ENCODE measurements at regions of chr17 and their contacts with region 1.

Region 1: DNA sequence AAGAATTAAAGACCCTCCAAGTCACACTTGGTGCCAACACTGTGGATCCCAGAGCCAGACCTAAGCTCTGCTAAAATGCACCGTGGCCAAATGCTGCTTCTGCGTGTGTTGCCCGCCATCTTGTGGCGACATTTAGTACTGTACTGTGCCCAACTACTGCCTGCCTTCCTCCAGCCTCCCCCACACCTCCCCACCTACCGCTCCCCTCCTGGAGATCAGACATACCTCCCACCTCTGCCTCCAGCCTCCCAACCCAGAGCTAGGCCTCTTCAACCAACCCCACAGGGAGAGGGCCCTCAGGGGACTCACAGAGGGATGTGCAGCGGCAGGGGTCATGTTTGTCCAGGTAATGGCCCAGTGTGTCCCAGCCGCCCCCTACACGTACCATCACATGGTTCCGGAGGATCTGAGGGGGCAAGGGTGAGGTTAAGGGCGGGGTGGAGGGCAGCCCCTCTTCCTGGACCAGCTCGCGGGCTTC is 5.5 kb downstream of the GAS2L2 start:
- DNase-seq: peak; percentile 68
- H3K4me3 ChIP-seq: no peak overlapping the region
- H3K27ac ChIP-seq: no peak overlapping the region
- H3K4me1 ChIP-seq: no peaks in the 10 kb centered on the region
- H3K27me3 ChIP-seq: peaks cover 25% of the 10 kb centered on the region in 2 experiments
- CTCF ChIP-seq: peak; percentile 67 to 83
- POLR2A ChIP-seq: no peak

Region 2: GRCh38 chr17:35170968-35171771 is 576.4 kb before region 1 on chr17:
- CTCF ChIA-PET with region 1: interaction called, 13 read pairs
- POLR2A ChIA-PET with region 1: no interaction called
- dilution Hi-C with region 1: no loop called
- intact Hi-C with region 1: loop called (anchors 1 kb)
- DNase-seq: peak; percentile 53
- H3K4me3 ChIP-seq: no peak overlapping the region
- H3K27ac ChIP-seq: no peak overlapping the region
- H3K4me1 ChIP-seq: no peaks in the 10 kb centered on the region
- H3K27me3 ChIP-seq: peaks cover 0 to 3% of the 10 kb centered on the region in 2 experiments
- CTCF ChIP-seq: no peak
- POLR2A ChIP-seq: no peak

Region 3: GRCh38 chr17:35534576-35535093 is 212.9 kb before region 1 on chr17:
- CTCF ChIA-PET with region 1: interaction called, 16 read pairs
- POLR2A ChIA-PET with region 1: no interaction called
- dilution Hi-C with region 1: no loop called
- intact Hi-C with region 1: loop called (anchors 1 kb)
- DNase-seq: no peak
- H3K4me3 ChIP-seq: no peak overlapping the region
- H3K27ac ChIP-seq: no peak overlapping the region
- H3K4me1 ChIP-seq: peaks cover 9% of the 10 kb centered on the region
- H3K27me3 ChIP-seq: no peaks in the 10 kb centered on the region
- CTCF ChIP-seq: no peak
- POLR2A ChIP-seq: no peak

Region 4: DNA sequence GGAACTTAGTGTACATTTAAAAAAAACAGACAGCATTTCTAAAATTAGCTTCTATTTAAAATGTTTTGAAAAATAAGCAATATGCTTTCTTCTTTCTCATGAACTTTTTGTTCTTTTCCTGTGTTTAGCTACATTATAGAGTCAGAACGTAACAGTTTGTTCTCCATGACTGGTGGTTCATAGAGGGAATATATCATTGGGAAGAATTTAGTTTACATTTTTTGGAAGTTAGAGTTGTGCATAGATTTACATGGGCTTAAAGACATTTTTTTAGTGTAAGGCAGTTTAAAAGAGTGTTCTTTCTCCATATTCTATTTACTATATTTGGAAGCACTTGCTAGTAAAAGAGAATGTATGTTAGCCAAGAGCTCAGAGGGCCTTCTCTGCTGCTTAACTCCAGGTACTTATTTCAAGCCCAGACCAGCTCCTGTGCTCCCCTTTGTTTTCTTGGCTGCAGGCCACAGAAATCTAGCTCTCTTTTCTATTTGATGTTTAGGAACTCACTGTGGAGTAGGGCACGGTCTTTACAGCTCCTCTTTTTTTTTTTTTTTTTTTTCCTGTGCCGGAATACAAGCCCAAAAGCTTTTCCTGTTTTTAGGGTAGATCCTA is 140.2 kb before region 1 on chr17:
- CTCF ChIA-PET with region 1: interaction called, 270 read pairs
- POLR2A ChIA-PET with region 1: no interaction called
- dilution Hi-C with region 1: loop called (anchors 25 kb)
- intact Hi-C with region 1: no loop called
- DNase-seq: no peak
- H3K4me3 ChIP-seq: no peak overlapping the region
- H3K27ac ChIP-seq: no peak overlapping the region
- H3K4me1 ChIP-seq: no peaks in the 10 kb centered on the region
- H3K27me3 ChIP-seq: no peaks in the 10 kb centered on the region
- CTCF ChIP-seq: no peak
- POLR2A ChIP-seq: no peak

Region 5: DNA sequence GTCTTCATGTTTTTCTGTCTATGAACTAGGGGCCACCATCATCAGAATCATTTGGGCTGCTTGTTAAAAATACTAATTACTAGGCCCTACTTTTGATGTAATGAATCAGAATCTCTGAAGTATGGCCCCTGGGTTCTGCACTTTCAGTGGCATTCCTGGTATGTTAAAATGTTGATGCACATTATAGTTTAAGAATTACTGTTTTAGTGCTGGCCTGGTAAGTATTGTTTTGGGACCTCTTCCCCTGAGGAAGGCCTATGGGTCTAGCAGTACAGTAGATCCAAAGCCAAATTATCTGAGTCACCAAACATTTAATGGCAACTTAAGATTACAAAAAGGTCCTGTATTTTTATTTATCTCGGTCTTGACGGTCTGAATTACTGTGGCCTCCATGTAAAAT is 101.7 kb before region 1 on chr17:
- CTCF ChIA-PET with region 1: interaction called, 10 read pairs
- POLR2A ChIA-PET with region 1: no interaction called
- dilution Hi-C with region 1: no loop called
- intact Hi-C with region 1: no loop called
- DNase-seq: no peak
- H3K4me3 ChIP-seq: no peak overlapping the region
- H3K27ac ChIP-seq: no peak overlapping the region
- H3K4me1 ChIP-seq: no peaks in the 10 kb centered on the region
- H3K27me3 ChIP-seq: no peaks in the 10 kb centered on the region
- CTCF ChIP-seq: no peak
- POLR2A ChIP-seq: no peak

Region 6: DNA sequence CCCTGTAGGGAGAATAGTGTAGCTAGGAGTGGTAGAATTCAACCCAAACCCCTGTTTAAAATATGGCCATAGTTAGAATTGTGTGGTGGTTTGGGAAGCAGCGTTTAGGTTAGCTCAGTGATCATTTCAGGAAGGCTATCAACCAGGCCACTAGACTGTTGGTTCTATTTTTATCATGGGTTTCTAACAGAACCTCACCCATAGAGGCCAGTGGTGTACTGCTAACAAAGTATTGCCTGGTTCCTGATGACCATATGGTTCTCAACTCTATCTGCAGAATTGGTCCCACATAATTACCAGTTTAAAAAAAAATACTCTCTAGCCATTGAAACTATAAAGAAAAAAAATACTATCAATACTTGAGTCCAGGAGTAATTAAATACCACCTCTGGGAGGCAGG is 86.7 kb before region 1 on chr17:
- CTCF ChIA-PET with region 1: interaction called, 12 read pairs
- POLR2A ChIA-PET with region 1: no interaction called
- dilution Hi-C with region 1: no loop called
- intact Hi-C with region 1: no loop called
- DNase-seq: no peak
- H3K4me3 ChIP-seq: no peak overlapping the region
- H3K27ac ChIP-seq: no peak overlapping the region
- H3K4me1 ChIP-seq: no peaks in the 10 kb centered on the region
- H3K27me3 ChIP-seq: no peaks in the 10 kb centered on the region
- CTCF ChIP-seq: no peak
- POLR2A ChIP-seq: no peak

Region 7: DNA sequence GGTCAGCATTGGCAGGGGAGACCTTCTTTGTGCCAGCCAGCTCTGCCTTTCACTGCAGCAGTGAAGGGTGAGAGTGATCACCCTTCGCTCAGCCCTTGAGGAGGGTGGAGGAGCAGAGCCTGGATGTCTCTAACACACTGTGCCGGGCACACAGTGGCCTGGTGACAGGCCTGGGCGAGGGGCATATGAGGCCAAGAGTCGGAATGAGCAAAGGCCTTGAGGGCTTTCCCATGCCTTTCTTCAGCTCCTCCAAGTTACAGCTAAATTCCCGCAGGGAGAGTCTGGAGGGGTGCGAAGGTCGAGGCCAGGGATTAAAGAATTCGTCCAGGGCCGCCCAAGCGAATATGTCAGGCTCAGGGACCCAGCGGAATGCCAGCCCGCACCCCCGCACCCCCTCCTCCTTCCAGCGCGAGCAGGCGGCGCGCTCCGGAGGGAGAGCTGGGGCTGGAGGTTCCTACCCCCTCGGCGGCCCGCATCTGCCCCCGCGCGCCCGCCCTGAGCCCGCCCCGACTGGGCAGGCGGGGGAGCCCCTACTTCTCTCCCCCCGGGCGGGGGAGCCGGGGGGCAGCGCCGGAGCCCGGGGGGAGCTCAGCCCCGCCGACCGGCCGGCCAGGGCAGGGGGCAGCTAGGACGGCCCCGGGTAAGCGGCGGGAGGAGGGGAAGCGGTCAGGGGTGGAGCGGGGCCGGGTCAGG is 16.2 kb before region 1 on chr17 and contains the start of gene RASL10B:
- CTCF ChIA-PET with region 1: interaction called, 16 read pairs
- POLR2A ChIA-PET with region 1: no interaction called
- dilution Hi-C with region 1: no loop called
- intact Hi-C with region 1: no loop called
- DNase-seq: peak; percentile 28
- H3K4me3 ChIP-seq: peak within 1 kb of the TSS in 2 of 3 experiments; percentile 6 to 44
- H3K27ac ChIP-seq: no peak within 1 kb of the TSS
- H3K4me1 ChIP-seq: peaks cover 4% of the 10 kb centered on the region
- H3K27me3 ChIP-seq: peaks cover 3 to 11% of the 10 kb centered on the region in 2 experiments
- CTCF ChIP-seq: no peak
- POLR2A ChIP-seq: no peak
- total RNA-seq, gene RASL10B: 0.71 and 0.78 TPM in 2 replicates

Region 8: DNA sequence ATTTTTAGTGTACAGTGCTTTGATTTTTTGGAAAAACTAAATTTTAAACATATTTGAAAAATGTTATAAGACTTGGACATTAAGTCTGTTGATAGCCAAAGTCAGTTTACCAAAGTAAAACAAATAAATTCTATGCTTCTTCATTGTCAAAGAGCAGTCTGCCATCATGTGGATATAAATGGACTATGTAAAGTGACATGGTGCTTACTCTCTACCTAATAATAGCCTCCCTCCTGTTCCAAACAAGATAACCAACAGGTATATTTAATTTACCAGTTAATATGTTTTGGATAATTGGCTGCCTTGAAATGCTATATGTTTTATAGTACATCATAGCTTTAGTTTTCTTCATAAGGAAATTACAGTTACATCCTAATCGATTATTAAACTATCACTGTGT is 77.6 kb after region 1 on chr17:
- CTCF ChIA-PET with region 1: no interaction called
- POLR2A ChIA-PET with region 1: no interaction called
- dilution Hi-C with region 1: no loop called
- intact Hi-C with region 1: no loop called
- DNase-seq: no peak
- H3K4me3 ChIP-seq: no peak overlapping the region
- H3K27ac ChIP-seq: no peak overlapping the region
- H3K4me1 ChIP-seq: no peaks in the 10 kb centered on the region
- H3K27me3 ChIP-seq: no peaks in the 10 kb centered on the region
- CTCF ChIP-seq: no peak
- POLR2A ChIP-seq: no peak

Measured in endothelial cell of umbilical vein (primary cell).